H1 (cell line): ENCODE measurements at regions of chr11 and their contacts with region 1.

Region 1: DNA sequence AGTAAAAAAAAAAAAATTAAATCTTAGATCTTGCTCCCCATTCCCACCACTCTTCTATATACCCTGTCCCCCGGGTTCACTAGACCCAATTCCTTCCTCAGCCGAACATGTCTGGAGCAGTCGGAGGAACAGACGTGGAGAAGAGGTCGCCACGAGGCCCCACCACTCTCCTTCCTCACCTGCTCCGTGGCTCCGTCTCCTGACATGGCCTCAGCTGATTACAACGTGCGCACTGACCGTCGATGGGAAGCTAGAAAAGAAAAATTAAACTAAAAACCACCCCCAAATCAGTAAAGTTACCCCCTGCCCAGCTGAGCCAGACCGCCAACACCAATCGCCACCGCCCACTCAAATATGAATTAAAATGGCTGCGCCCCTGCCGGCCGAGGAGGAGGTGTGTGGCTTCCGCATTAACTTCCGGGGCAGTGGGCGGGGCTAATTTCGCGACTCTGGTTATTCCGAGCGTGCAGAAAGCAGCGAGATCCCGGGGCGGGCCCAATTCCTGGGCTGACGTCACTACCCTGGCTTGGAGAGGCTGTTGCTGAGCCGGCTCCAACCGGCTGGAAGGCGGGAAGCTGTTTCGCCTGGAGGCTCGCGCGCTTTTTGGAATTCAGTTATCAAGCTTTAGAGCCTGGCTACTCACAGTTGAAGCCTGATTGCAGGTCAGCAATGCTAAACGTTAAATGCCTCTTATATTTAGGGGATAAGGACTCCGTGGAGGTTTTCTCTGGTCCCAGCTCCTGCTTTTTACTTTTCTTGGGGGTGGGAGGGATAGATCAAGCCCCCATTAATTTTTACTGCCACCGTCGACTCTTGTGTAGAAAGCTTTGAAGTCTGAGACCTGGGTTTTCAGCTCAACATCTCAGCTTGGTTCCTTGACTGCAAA is at the start of gene CSTF3:
- DNase-seq: peak; percentile 98 to 100
- H3K4me3 ChIP-seq: peak within 1 kb of the TSS; percentile 83 to 99 (median 99)
- H3K27ac ChIP-seq: peak within 1 kb of the TSS; percentile 91
- H3K4me1 ChIP-seq: peaks cover 0 to 11% (median 1%) of the 10 kb centered on the region in 4 experiments; a peak in 1 of 7 replicates
- H3K27me3 ChIP-seq: no peaks in the 10 kb centered on the region
- CTCF ChIP-seq: peak; percentile 24 to 41 (median 37)
- EP300 ChIP-seq: 0 out of 3 replicates have a peak, but pooled peaks of 1 of the 2 experiments have one; percentile 68
- POLR2A ChIP-seq: peak; percentile 87 to 96
- RAD21 ChIP-seq: peak in 1 of 2 experiments; percentile 4; a peak in 1 of 4 replicates
- total RNA-seq, gene CSTF3: 54.7 and 61.0 TPM in 2 replicates

Region 2: DNA sequence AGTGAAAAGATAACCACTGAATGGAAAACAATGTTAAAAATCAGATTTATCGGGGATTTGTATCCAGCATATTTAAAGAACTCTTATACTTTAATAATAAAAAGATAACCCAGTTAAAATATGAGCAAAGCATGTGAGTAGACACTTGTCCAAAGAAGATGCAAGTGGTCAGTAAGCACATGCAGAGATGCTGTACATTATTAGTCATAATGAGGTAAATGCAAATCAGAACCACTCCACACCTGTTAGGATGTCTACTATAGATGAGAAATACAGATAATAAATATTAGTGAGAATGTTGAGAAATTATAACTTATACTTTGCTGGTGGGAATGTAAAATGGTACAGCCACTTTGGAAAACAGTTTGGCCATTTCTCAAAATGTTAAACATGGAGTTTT is 240.8 kb before region 1 on chr11:
- CTCF ChIA-PET with region 1: no interaction called
- POLR2A ChIA-PET with region 1: no interaction called
- DNase-seq: no peak
- H3K4me3 ChIP-seq: no peak overlapping the region
- H3K27ac ChIP-seq: no peak overlapping the region
- H3K4me1 ChIP-seq: peaks cover 0 to 2% (median 0%) of the 10 kb centered on the region in 4 experiments; a peak in 2 of 7 replicates
- H3K27me3 ChIP-seq: no peaks in the 10 kb centered on the region
- CTCF ChIP-seq: no peak
- EP300 ChIP-seq: no peak
- POLR2A ChIP-seq: no peak
- RAD21 ChIP-seq: no peak

Region 3: GRCh38 chr11:33172996-33173395 is 11.6 kb after region 1 on chr11:
- CTCF ChIA-PET with region 1: interaction called, 36 read pairs
- POLR2A ChIA-PET with region 1: interaction called, 5 read pairs
- DNase-seq: no peak
- H3K4me3 ChIP-seq: no peak overlapping the region
- H3K27ac ChIP-seq: no peak overlapping the region
- H3K4me1 ChIP-seq: peaks cover 0 to 7% (median 2%) of the 10 kb centered on the region in 4 experiments; a peak in 4 of 7 replicates
- H3K27me3 ChIP-seq: no peaks in the 10 kb centered on the region
- CTCF ChIP-seq: no peak
- EP300 ChIP-seq: no peak
- POLR2A ChIP-seq: no peak
- RAD21 ChIP-seq: no peak; a peak in 1 of 4 replicates

Region 4: GRCh38 chr11:33187998-33188722 is 26.8 kb after region 1 on chr11:
- CTCF ChIA-PET with region 1: interaction called, 13 read pairs
- POLR2A ChIA-PET with region 1: interaction called, 6 read pairs
- DNase-seq: no peak
- H3K4me3 ChIP-seq: peak overlapping the region in 1 of 4 experiments; percentile 26; a peak in 1 of 8 replicates
- H3K27ac ChIP-seq: no peak overlapping the region
- H3K4me1 ChIP-seq: peaks cover 5 to 9% (median 7%) of the 10 kb centered on the region in 4 experiments; a peak in 6 of 7 replicates
- H3K27me3 ChIP-seq: no peaks in the 10 kb centered on the region
- CTCF ChIP-seq: no peak
- EP300 ChIP-seq: no peak
- POLR2A ChIP-seq: no peak
- RAD21 ChIP-seq: no peak

Region 5: DNA sequence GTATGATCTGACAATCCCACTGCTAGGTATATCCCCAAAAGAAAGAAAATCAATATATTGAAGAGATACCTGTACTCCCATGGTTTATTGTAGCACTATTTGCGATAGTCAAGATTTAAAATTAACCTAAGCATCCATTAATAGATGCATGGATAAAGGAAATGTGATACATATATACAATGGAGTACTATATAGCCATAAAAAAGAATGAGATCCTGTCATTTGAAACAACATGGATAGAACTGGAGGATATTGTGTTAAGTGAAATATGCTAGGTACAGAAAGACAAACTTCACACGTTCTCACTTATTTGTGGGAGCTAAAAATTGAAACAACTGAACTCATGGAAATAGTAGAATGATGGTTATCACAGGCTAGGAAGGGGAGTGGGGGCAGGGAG is 81.2 kb after region 1 on chr11:
- CTCF ChIA-PET with region 1: no interaction called
- POLR2A ChIA-PET with region 1: no interaction called
- DNase-seq: no peak
- H3K4me3 ChIP-seq: no peak overlapping the region
- H3K27ac ChIP-seq: no peak overlapping the region
- H3K4me1 ChIP-seq: no peaks in the 10 kb centered on the region
- H3K27me3 ChIP-seq: no peaks in the 10 kb centered on the region
- CTCF ChIP-seq: no peak
- EP300 ChIP-seq: no peak
- POLR2A ChIP-seq: no peak
- RAD21 ChIP-seq: no peak

Region 6: DNA sequence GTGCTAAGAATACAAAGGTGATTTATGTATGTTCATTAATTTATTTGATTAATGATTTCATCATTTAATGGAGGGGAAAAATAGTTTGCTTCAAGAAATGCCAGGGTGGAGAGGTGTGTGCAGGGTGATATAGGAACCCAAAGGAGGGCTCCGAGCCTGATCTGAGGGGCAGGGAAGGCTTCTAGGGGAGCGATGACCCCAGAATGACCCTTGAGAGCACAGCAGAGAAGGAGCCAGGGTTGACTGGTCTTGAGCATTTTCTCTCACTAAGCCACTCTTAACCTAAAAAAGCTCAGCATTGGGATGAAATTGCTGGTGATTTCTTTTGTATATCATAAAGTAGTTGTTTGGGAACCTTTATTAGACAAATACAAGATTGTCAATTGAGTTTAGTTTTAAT is 130.9 kb after region 1 on chr11:
- CTCF ChIA-PET with region 1: no interaction called
- POLR2A ChIA-PET with region 1: no interaction called
- DNase-seq: no peak
- H3K4me3 ChIP-seq: no peak overlapping the region
- H3K27ac ChIP-seq: no peak overlapping the region
- H3K4me1 ChIP-seq: no peaks in the 10 kb centered on the region
- H3K27me3 ChIP-seq: no peaks in the 10 kb centered on the region
- CTCF ChIP-seq: no peak
- EP300 ChIP-seq: no peak
- POLR2A ChIP-seq: no peak
- RAD21 ChIP-seq: no peak

Region 7: DNA sequence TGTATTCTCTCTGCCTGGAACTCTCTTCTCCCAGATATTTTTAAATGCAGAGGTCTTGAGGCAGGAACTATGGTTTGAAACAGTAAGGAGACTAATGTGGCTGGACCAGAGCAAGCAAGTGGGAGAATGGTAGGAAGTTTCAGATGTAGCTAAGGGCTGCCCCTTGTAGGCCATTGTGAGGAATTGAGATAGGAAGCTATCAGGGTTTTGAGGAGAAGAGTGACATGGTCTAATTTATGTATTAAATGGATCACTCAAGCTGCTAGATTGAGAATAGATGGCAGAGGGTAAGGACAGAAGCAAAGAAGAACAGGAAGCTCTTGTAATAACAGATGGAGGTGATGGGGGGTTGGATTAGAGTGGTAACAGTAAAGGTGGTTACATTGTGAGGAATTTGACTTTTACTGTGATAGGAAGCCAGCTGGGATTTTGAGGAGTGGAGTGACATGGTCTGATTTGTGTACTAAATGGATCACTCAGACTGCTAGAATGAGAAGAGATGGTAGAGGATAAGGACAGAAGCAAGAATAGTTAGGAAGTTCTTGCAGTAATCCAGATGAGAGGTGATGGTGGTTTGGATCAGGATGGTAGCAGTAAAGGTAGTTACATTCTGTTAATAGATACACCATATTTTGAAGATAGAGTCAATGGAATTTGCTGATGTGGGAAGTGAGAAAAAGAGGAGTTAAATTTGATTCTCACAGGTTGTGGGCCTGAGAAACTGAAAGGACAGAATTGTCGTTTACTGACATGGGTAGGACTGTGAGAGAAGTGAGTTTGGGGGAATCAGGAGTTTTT is 158.9 kb after region 1 on chr11:
- CTCF ChIA-PET with region 1: interaction called, 14 read pairs
- POLR2A ChIA-PET with region 1: no interaction called
- DNase-seq: no peak
- H3K4me3 ChIP-seq: no peak overlapping the region
- H3K27ac ChIP-seq: no peak overlapping the region
- H3K4me1 ChIP-seq: peaks cover 0 to 6% (median 0%) of the 10 kb centered on the region in 4 experiments; a peak in 1 of 7 replicates
- H3K27me3 ChIP-seq: no peaks in the 10 kb centered on the region
- CTCF ChIP-seq: peak in 2 of 3 experiments; percentile 10 to 20; a peak in 2 of 4 replicates
- EP300 ChIP-seq: no peak
- POLR2A ChIP-seq: no peak
- RAD21 ChIP-seq: peak; percentile 55 to 59

Region 8: DNA sequence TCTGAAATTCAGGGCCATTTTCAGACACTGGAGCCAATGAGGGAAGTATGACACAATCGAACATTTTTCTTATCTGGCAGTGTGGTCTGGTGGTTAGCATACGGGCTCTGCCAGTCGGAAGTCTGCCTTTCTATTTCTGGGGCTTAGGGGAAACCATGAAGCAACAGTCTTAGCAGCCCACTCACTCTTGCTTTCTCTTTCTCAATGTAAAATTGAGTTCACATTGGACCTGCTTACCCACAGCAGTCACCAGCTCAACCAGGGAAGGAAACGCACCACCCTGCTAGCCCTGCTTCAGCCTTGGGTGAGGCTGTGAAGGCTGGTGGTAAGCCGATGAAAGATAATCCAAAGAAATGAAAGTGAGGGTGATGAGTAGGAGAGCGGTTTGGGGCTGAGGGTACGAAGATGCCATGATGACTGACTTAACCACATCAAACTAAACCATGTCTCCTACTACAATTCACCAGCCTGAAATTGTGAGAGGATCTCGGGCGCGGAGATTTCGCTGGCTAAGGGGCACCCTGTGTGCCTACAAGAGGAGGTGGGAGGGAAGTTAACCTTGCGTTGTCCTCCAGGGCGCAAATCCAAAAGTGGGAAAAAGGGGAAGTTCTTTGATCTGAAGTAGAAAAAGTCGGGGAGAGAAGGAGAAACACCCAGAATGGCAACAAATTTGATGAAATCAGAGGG is 732.5 kb after region 1 on chr11:
- CTCF ChIA-PET with region 1: no interaction called
- POLR2A ChIA-PET with region 1: no interaction called
- DNase-seq: no peak
- H3K4me3 ChIP-seq: no peak overlapping the region
- H3K27ac ChIP-seq: no peak overlapping the region
- H3K4me1 ChIP-seq: peaks cover 0 to 7% (median 3%) of the 10 kb centered on the region in 4 experiments; a peak in 3 of 7 replicates
- H3K27me3 ChIP-seq: no peaks in the 10 kb centered on the region
- CTCF ChIP-seq: no peak
- EP300 ChIP-seq: no peak
- POLR2A ChIP-seq: no peak
- RAD21 ChIP-seq: no peak